ENCODE measurements at regions of chr6 and their contacts with region 1.

Region 1: GRCh38 chr6:71533939-71534379 is 245.3 kb downstream of the OGFRL1 start:
- DNase-seq: no peak
- H3K4me3 ChIP-seq: no peak overlapping the region
- H3K27ac ChIP-seq: no peak overlapping the region
- H3K4me1 ChIP-seq: peaks cover 10% of the 10 kb centered on the region
- H3K27me3 ChIP-seq: no peaks in the 10 kb centered on the region
- CTCF ChIP-seq: peak; percentile 81

Region 2: DNA sequence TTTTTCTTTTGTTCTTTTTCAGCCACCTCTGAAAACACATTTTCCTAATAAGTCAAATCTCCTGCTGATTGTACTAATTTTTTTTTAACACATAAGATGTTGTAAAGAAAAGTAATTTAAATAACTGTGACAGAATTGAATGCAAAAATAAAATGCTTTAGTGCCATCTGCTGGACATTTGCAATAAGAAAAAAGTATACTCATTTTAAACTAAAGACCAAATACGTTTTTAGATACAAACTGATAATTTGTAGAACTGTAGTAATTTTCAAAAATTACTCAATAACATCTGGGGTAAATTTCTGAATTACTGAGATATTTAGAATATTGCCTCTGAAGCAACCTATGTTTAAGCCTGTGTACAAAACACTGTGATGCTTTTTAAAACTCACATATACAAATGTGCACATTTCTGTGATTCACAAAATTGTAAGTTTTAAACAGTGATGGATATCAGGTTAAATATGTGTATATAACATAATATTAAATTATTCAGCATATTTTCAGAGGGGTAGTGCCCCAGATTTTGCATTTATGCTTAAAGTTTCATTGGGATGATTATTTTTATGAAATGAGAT is 551.1 kb after region 1 on chr6:
- CTCF ChIA-PET with region 1: no interaction called
- POLR2A ChIA-PET with region 1: no interaction called
- intact Hi-C with region 1: loop called (anchors 1 kb)
- DNase-seq: no peak
- H3K4me3 ChIP-seq: no peak overlapping the region
- H3K27ac ChIP-seq: no peak overlapping the region
- H3K4me1 ChIP-seq: no peaks in the 10 kb centered on the region
- H3K27me3 ChIP-seq: no peaks in the 10 kb centered on the region
- CTCF ChIP-seq: peak; percentile 77